Activated naive CD4-positive, alpha-beta T cell treated with anti-CD3 and anti-CD28 coated beads, Interleukin-2, amount 10 ng/mL, durations not matched to agents 7 days and 5 days (primary cell): ENCODE measurements at regions of chr22 and their contacts with region 1.

Region 1: GRCh38 chr22:40044102-40044869 is 49.5 kb downstream of the FAM83F start:
- DNase-seq: peak; percentile 99
- H3K4me3 Mint-ChIP-seq: peak overlapping the region; percentile 86
- H3K27ac Mint-ChIP-seq: peak overlapping the region; percentile 97
- H3K4me1 Mint-ChIP-seq: peaks cover 37% of the 10 kb centered on the region
- H3K27me3 Mint-ChIP-seq: peaks cover 22% of the 10 kb centered on the region

Region 2: GRCh38 chr22:40193429-40194421 is 149.4 kb after region 1 on chr22:
- CTCF ChIA-PET with region 1: interaction called, 19 read pairs
- DNase-seq: no peak
- H3K4me3 Mint-ChIP-seq: no peak overlapping the region
- H3K27ac Mint-ChIP-seq: peak overlapping the region; percentile 70
- H3K4me1 Mint-ChIP-seq: peaks cover 45% of the 10 kb centered on the region
- H3K27me3 Mint-ChIP-seq: no peaks in the 10 kb centered on the region